ENCODE measurements at regions of chr21 and their contacts with region 1.

Region 1: GRCh38 chr21:23008601-23009202 is 2010.5 kb downstream of the NCAM2 start:
- DNase-seq: no peak
- ATAC-seq: no peak
- H3K4me3 ChIP-seq: no peak overlapping the region
- H3K27ac ChIP-seq: no peak overlapping the region
- H3K4me1 ChIP-seq: no peaks in the 10 kb centered on the region
- H3K27me3 ChIP-seq: no peaks in the 10 kb centered on the region
- CTCF ChIP-seq: no peak

Region 2: GRCh38 chr21:22993822-22994574 is 14.7 kb before region 1 on chr21:
- intact Hi-C with region 1: loop called in 1 of 2 experiments (anchors 2 kb)
- DNase-seq: no peak
- ATAC-seq: no peak
- H3K4me3 ChIP-seq: no peak overlapping the region
- H3K27ac ChIP-seq: no peak overlapping the region
- H3K4me1 ChIP-seq: no peaks in the 10 kb centered on the region
- H3K27me3 ChIP-seq: no peaks in the 10 kb centered on the region
- CTCF ChIP-seq: no peak